ENCODE measurements at regions of chr10 and their contacts with region 1.

Region 1: GRCh38 chr10:99659031-99659867 is at the start of gene ENTPD7:
- DNase-seq: peak; percentile 95 to 97
- ATAC-seq: peak; percentile 100
- H3K4me3 ChIP-seq: peak within 1 kb of the TSS; percentile 95
- H3K27ac ChIP-seq: peak within 1 kb of the TSS; percentile 47
- H3K4me1 ChIP-seq: peaks cover 4% of the 10 kb centered on the region
- H3K27me3 ChIP-seq: no peaks in the 10 kb centered on the region
- CTCF ChIP-seq: peak; percentile 41
- total RNA-seq, gene ENTPD7: 1.1 to 2.1 (median 1.4) TPM

Region 2: GRCh38 chr10:99620713-99621453 is 38.4 kb before region 1 on chr10:
- intact Hi-C with region 1: loop called (anchors 5 kb)
- DNase-seq: peak; percentile 95 to 97
- ATAC-seq: peak; percentile 90 to 91 (median 90)
- H3K4me3 ChIP-seq: peak overlapping the region; percentile 83
- H3K27ac ChIP-seq: peak overlapping the region; percentile 92
- H3K4me1 ChIP-seq: peaks cover 31% of the 10 kb centered on the region
- H3K27me3 ChIP-seq: no peaks in the 10 kb centered on the region
- CTCF ChIP-seq: peak; percentile 5

Measured in psoas muscle (tissue), 8 donors.